Activated CD4-positive, alpha-beta T cell treated with anti-CD3 and anti-CD28 coated beads for 36 hours (primary cell): ENCODE measurements at regions of chrX and their contacts with region 1.

Region 1: DNA sequence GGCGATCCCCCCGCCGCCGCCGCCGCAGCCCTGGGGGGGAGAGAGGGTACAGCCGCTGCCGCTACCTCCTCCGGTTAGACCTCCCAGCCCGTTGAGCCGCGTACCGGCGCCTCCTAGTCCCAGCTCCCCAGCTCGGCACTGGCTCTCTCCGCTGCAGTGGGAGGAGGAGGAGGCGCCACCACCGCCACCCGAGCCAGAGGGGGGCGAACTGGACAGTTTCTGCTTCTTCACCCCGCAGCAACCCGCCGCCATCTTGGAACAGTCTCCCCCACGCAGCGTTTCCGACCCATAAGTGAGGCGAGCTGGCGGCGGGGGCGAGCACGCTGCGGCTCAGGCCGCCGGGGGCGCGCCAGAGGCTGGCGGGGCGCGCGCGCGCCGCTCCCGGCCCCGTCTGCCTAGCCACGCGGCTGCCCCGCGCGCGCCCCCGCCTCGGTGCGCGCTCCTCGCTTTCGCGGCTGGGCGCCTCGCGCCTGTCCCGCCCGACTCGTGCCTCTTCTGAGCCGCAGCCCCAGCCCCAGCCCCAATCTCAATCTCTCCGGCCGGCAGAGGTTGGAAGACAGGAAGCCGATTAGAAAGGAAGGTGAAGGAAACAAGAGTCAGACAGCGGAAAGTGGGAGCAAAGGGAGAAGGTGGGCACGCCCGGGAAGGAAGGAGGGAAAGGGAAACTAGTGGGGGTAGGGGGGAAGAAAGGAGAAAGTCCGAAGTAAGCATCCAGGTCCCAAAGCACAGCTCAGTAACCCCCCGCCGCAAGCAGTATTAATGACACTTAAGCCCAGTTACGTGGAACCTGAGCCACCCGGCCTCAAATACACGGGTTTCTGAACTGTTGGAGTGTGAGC is at the start of gene AMMECR1:
- DNase-seq: peak; percentile 87
- ATAC-seq: peak; percentile 79
- H3K4me3 Mint-ChIP-seq: peak within 1 kb of the TSS; percentile 88
- H3K27ac Mint-ChIP-seq: peak within 1 kb of the TSS; percentile 97
- H3K4me1 Mint-ChIP-seq: peaks cover 22% of the 10 kb centered on the region
- H3K27me3 Mint-ChIP-seq: no peaks in the 10 kb centered on the region
- total RNA-seq, gene AMMECR1: 6.9 to 7.6 TPM

Region 2: GRCh38 chrX:109732780-109733657 is 585.0 kb before region 1 on chrX and contains the start of gene ACSL4:
- CTCF ChIA-PET with region 1: no interaction called
- POLR2A ChIA-PET with region 1: no interaction called
- intact Hi-C with region 1: loop called in 1 of 2 experiments (anchors 1 kb)
- DNase-seq: peak; percentile 91
- ATAC-seq: peak; percentile 77
- H3K4me3 Mint-ChIP-seq: peak within 1 kb of the TSS; percentile 82
- H3K27ac Mint-ChIP-seq: peak within 1 kb of the TSS; percentile 99
- H3K4me1 Mint-ChIP-seq: peaks cover 22% of the 10 kb centered on the region
- H3K27me3 Mint-ChIP-seq: no peaks in the 10 kb centered on the region
- total RNA-seq, gene ACSL4: 44.0 to 64.5 TPM

Region 3: GRCh38 chrX:110002300-110003166 is 315.5 kb before region 1 on chrX and contains the start of gene TMEM164:
- CTCF ChIA-PET with region 1: no interaction called
- POLR2A ChIA-PET with region 1: no interaction called
- intact Hi-C with region 1: loop called in 1 of 2 experiments (anchors 2 kb)
- DNase-seq: peak; percentile 87
- ATAC-seq: peak; percentile 84
- H3K4me3 Mint-ChIP-seq: peak within 1 kb of the TSS; percentile 81
- H3K27ac Mint-ChIP-seq: peak within 1 kb of the TSS; percentile 74
- H3K4me1 Mint-ChIP-seq: peaks cover 27% of the 10 kb centered on the region
- H3K27me3 Mint-ChIP-seq: no peaks in the 10 kb centered on the region
- total RNA-seq, gene TMEM164: 10.5 to 12.2 TPM

Region 4: GRCh38 chrX:110192516-110192915 is 125.5 kb before region 1 on chrX:
- CTCF ChIA-PET with region 1: no interaction called
- POLR2A ChIA-PET with region 1: no interaction called
- intact Hi-C with region 1: loop called in 1 of 2 experiments (anchors 10 kb)
- DNase-seq: no peak
- ATAC-seq: no peak
- H3K4me3 Mint-ChIP-seq: no peak overlapping the region
- H3K27ac Mint-ChIP-seq: peak overlapping the region; percentile 19
- H3K4me1 Mint-ChIP-seq: peaks cover 16% of the 10 kb centered on the region
- H3K27me3 Mint-ChIP-seq: no peaks in the 10 kb centered on the region

Region 5: GRCh38 chrX:110268886-110269285 is 49.2 kb before region 1 on chrX:
- CTCF ChIA-PET with region 1: no interaction called
- POLR2A ChIA-PET with region 1: no interaction called
- intact Hi-C with region 1: loop called in 1 of 2 experiments (anchors 10 kb)
- DNase-seq: no peak
- ATAC-seq: no peak
- H3K4me3 Mint-ChIP-seq: no peak overlapping the region
- H3K27ac Mint-ChIP-seq: peak overlapping the region; percentile 15
- H3K4me1 Mint-ChIP-seq: peaks cover 40% of the 10 kb centered on the region
- H3K27me3 Mint-ChIP-seq: no peaks in the 10 kb centered on the region

Region 6: GRCh38 chrX:110412971-110413721 is 95.1 kb after region 1 on chrX:
- CTCF ChIA-PET with region 1: no interaction called
- POLR2A ChIA-PET with region 1: no interaction called
- intact Hi-C with region 1: loop called in 1 of 2 experiments (anchors 10 kb)
- DNase-seq: peak; percentile 80
- ATAC-seq: peak; percentile 92
- H3K4me3 Mint-ChIP-seq: no peak overlapping the region
- H3K27ac Mint-ChIP-seq: no peak overlapping the region
- H3K4me1 Mint-ChIP-seq: peaks cover 6% of the 10 kb centered on the region
- H3K27me3 Mint-ChIP-seq: no peaks in the 10 kb centered on the region